ENCODE measurements at regions of chr3 and their contacts with region 1.

Region 1: DNA sequence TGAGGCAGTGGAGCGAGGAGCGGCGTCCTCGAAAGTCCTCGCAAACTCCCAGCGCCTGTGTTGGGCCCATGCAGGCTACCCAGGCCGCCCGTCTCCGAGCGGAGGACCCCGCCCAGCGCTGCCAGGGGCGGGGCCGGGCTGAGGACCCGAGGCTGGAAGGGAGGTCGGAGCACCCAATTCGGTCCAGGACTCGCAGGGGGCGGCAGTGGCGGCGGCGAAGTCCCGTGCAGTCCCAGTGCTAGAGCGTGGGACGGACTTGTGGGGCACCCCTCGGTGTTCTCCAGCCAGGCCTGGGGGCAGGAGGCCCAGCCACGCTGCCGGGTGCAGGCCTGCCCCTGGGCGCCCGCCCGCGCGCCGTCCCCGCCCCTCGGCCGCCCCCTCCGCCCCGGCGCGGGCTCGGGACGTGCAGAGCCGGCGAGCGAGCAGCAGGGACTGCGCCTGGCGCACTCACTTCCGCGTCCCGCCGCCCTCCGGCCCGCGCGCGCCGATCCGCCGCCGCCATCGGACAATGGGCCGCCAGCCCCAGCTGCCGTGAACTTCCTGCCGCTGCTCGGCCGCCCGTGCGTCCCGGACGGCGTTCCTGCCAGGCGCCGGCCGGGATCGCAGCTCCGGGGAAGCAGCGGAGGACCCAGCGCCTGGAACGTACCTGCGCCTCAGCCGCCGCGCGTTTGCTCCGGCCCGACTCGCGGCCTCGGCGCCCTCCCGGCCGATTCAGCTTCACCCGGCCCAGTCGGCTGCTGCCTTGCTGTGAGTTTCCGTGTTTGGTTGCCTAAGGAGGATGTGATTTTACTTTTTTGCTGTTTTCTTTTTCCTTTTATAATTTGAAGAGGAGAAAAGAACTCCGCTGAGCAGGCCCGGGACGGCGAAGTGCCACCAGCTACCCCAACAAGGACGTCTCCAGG is 592 bp upstream of the LIMD1 start:
- DNase-seq: peak; percentile 84
- ATAC-seq: peak; percentile 66
- H3K4me3 ChIP-seq: peak overlapping the region; percentile 57 to 90 (median 81)
- H3K4me3 Mint-ChIP-seq: peak overlapping the region; percentile 90
- H3K27ac ChIP-seq: peak overlapping the region; percentile 76 to 82
- H3K27ac Mint-ChIP-seq: peak overlapping the region; percentile 91
- H3K4me1 ChIP-seq: peaks cover 38 to 58% of the 10 kb centered on the region in 2 donors
- H3K4me1 Mint-ChIP-seq: peaks cover 56% of the 10 kb centered on the region
- H3K27me3 ChIP-seq: no peaks in the 10 kb centered on the region
- H3K27me3 Mint-ChIP-seq: no peaks in the 10 kb centered on the region
- CTCF ChIP-seq: no peak

Region 2: GRCh38 chr3:45507820-45508317 is 86.1 kb before region 1 on chr3:
- CTCF ChIA-PET with region 1: interaction called, 18 read pairs
- POLR2A ChIA-PET with region 1: interaction called, 5 read pairs
- intact Hi-C with region 1: loop called (anchors 2 kb)
- DNase-seq: no peak
- ATAC-seq: no peak
- H3K4me3 ChIP-seq: no peak overlapping the region
- H3K4me3 Mint-ChIP-seq: no peak overlapping the region
- H3K27ac ChIP-seq: no peak overlapping the region
- H3K27ac Mint-ChIP-seq: no peak overlapping the region
- H3K4me1 ChIP-seq: no peaks in the 10 kb centered on the region
- H3K4me1 Mint-ChIP-seq: no peaks in the 10 kb centered on the region
- H3K27me3 ChIP-seq: no peaks in the 10 kb centered on the region
- H3K27me3 Mint-ChIP-seq: no peaks in the 10 kb centered on the region
- CTCF ChIP-seq: no peak

Region 3: GRCh38 chr3:45612918-45613602 is 19.1 kb after region 1 on chr3:
- CTCF ChIA-PET with region 1: interaction called, 53 read pairs
- POLR2A ChIA-PET with region 1: interaction called, 19 read pairs
- intact Hi-C with region 1: loop called (anchors 1 kb)
- DNase-seq: peak; percentile 73
- ATAC-seq: peak; percentile 67
- H3K4me3 ChIP-seq: peak overlapping the region in 1 of 5 experiments; percentile 4
- H3K4me3 Mint-ChIP-seq: peak overlapping the region; percentile 65
- H3K27ac ChIP-seq: peak overlapping the region in 1 of 2 donors; percentile 42
- H3K27ac Mint-ChIP-seq: peak overlapping the region; percentile 47
- H3K4me1 ChIP-seq: peaks cover 51 to 63% of the 10 kb centered on the region in 2 donors
- H3K4me1 Mint-ChIP-seq: peaks cover 85% of the 10 kb centered on the region
- H3K27me3 ChIP-seq: no peaks in the 10 kb centered on the region
- H3K27me3 Mint-ChIP-seq: no peaks in the 10 kb centered on the region
- CTCF ChIP-seq: no peak

Region 4: GRCh38 chr3:45665101-45665572 is 71.2 kb after region 1 on chr3:
- CTCF ChIA-PET with region 1: interaction called, 70 read pairs
- POLR2A ChIA-PET with region 1: interaction called, 7 read pairs
- intact Hi-C with region 1: loop called (anchors 2 kb)
- DNase-seq: peak; percentile 52
- ATAC-seq: peak; percentile 34
- H3K4me3 ChIP-seq: peak overlapping the region in 3 of 5 experiments; percentile 20 to 47 (median 26)
- H3K4me3 Mint-ChIP-seq: peak overlapping the region; percentile 68
- H3K27ac ChIP-seq: peak overlapping the region; percentile 36 to 72
- H3K27ac Mint-ChIP-seq: peak overlapping the region; percentile 66
- H3K4me1 ChIP-seq: peaks cover 12 to 18% of the 10 kb centered on the region in 2 donors
- H3K4me1 Mint-ChIP-seq: peaks cover 24% of the 10 kb centered on the region
- H3K27me3 ChIP-seq: no peaks in the 10 kb centered on the region
- H3K27me3 Mint-ChIP-seq: no peaks in the 10 kb centered on the region
- CTCF ChIP-seq: peak; percentile 33

Region 5: GRCh38 chr3:45841757-45842491 is 248.0 kb after region 1 on chr3 and contains the start of gene LZTFL1:
- CTCF ChIA-PET with region 1: no interaction called
- POLR2A ChIA-PET with region 1: no interaction called
- intact Hi-C with region 1: loop called (anchors 2 kb)
- DNase-seq: peak; percentile 96
- ATAC-seq: peak; percentile 90
- H3K4me3 ChIP-seq: peak within 1 kb of the TSS; percentile 65 to 95 (median 88)
- H3K4me3 Mint-ChIP-seq: peak within 1 kb of the TSS; percentile 98
- H3K27ac ChIP-seq: peak within 1 kb of the TSS; percentile 83 to 95
- H3K27ac Mint-ChIP-seq: peak within 1 kb of the TSS; percentile 97
- H3K4me1 ChIP-seq: peaks cover 12 to 16% of the 10 kb centered on the region in 2 donors
- H3K4me1 Mint-ChIP-seq: peaks cover 23% of the 10 kb centered on the region
- H3K27me3 ChIP-seq: no peaks in the 10 kb centered on the region
- H3K27me3 Mint-ChIP-seq: no peaks in the 10 kb centered on the region
- CTCF ChIP-seq: no peak
- total RNA-seq, gene LZTFL1: 17.8 and 18.4 TPM in 2 replicates

Measured in B cell (primary cell).